ENCODE measurements at regions of chr17 and their contacts with region 1.

Region 1: DNA sequence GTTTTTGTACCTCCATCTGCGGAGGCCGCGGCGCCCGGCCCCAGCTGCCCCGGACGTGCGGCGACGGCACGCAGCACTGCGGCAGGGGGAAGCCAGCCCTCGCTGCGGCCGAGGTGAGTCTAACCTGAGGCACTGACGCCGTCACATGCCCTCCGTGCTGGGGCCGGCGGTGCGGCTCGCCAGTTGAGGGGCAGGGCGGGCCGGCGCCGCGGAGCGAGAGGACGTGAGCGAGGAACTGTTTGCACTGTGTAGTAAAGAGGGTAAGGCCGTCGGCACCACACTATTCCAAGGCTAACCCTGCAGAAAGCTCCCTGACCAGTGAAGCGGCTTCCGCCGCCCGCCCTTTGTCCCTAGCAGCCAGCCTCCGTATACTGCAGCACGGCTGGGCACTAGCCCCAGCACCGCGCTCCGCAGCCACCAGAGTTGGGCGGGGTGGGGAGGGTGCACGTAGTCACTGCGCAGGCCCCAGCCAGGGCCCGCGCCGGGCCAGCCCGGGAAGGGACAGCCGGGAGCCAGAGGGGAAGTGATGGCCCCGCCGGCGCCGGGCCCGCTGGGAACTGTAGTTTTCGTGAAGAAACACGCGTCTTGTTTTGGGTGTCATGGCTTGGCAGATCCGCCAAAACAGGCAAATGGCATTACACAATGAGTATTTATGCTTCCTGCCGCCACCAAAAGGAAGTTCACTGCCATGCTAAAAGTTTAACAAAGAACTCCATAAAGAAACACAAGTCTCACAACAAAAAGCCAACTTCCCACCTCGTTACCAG is 580 bp upstream of the KANSL1 start:
- DNase-seq: peak; percentile 95 to 98 (median 96)
- H3K4me3 ChIP-seq: peak overlapping the region; percentile 79 to 95 (median 85)
- H3K4me3 Mint-ChIP-seq: peak overlapping the region; percentile 80 to 87
- H3K27ac ChIP-seq: peak overlapping the region; percentile 91 to 99
- H3K27ac Mint-ChIP-seq: peak overlapping the region; percentile 89 to 98 (median 94)
- H3K4me1 ChIP-seq: peaks cover 20 to 35% of the 10 kb centered on the region in 2 donors
- H3K4me1 Mint-ChIP-seq: peaks cover 32% of the 10 kb centered on the region
- H3K27me3 ChIP-seq: no peaks in the 10 kb centered on the region
- H3K27me3 Mint-ChIP-seq: peaks cover 0 to 2% (median 0%) of the 10 kb centered on the region in 3 donors
- CTCF ChIP-seq: peak; percentile 54

Region 2: DNA sequence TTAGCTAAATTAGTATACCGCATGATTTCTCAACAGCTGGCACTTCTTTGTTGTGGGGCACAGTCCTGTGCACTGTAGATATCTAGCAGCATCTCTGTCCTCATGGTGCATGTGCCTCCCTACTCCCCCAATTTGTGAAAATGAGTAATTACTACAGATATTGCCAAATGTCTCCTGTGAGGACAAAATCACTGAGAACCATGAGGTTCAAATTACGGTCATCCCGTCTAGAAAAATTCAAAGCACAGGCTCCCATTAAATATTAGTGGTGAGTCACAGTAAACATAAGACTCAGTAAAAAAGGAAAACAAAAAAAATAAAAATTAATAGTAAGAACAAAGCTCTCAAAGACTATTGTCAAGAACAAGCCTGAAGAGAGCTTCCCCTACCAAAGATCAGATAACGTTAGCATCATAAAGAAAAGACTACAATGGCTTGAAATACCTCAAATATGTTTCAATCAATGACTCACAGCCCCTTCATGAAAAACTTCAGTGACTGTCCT is 137.0 kb before region 1 on chr17:
- intact Hi-C with region 1: loop called in 1 of 2 experiments (anchors 10 kb)
- DNase-seq: no peak
- H3K4me3 ChIP-seq: no peak overlapping the region
- H3K4me3 Mint-ChIP-seq: no peak overlapping the region
- H3K27ac ChIP-seq: no peak overlapping the region
- H3K27ac Mint-ChIP-seq: peak overlapping the region in 4 of 7 donors; percentile 2 to 47 (median 18)
- H3K4me1 ChIP-seq: no peaks in the 10 kb centered on the region
- H3K4me1 Mint-ChIP-seq: peaks cover 3% of the 10 kb centered on the region
- H3K27me3 ChIP-seq: no peaks in the 10 kb centered on the region
- H3K27me3 Mint-ChIP-seq: no peaks in the 10 kb centered on the region
- CTCF ChIP-seq: no peak

Region 3: DNA sequence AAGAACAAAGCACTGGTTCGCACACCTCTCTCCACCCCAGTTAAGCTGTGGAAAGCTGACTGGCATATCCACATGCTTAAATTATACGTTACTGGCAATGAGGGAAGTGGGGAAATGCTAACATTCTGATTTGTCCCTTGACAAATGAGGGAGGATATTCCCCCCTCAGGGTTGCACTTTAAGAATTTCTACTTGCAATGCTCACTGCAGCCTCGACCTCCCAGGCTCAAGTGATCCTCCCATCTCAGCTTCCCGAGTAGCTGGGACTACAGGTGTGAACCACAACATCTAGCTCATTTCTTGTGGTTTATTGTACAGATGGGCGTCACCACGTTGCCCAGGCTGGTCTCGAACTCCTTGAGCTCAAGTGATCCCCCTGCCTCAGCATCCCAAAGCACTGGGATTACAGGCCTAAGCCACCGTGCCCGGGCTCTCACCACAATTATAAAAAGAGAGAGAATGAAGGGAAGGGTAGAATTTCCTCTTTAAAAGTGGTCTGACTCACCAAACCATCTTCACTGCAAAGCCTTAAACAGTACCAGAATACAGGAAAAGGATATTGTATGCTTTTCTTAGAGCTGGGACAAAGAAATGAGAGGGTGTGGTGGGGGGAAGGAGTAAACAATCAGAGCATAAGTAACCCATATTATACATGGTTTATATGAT is 39.5 kb before region 1 on chr17:
- intact Hi-C with region 1: loop called (anchors 5 kb)
- DNase-seq: peak in 1 of 3 donors; percentile 4
- H3K4me3 ChIP-seq: no peak overlapping the region
- H3K4me3 Mint-ChIP-seq: peak overlapping the region in 1 of 2 donors; percentile 6
- H3K27ac ChIP-seq: peak overlapping the region in 1 of 2 donors; percentile 39
- H3K27ac Mint-ChIP-seq: peak overlapping the region in 6 of 7 donors; percentile 25 to 76 (median 68)
- H3K4me1 ChIP-seq: peaks cover 17 to 27% of the 10 kb centered on the region in 2 donors
- H3K4me1 Mint-ChIP-seq: peaks cover 63% of the 10 kb centered on the region
- H3K27me3 ChIP-seq: no peaks in the 10 kb centered on the region
- H3K27me3 Mint-ChIP-seq: no peaks in the 10 kb centered on the region
- CTCF ChIP-seq: no peak

Region 4: GRCh38 chr17:46212634-46213435 is 19.0 kb after region 1 on chr17:
- intact Hi-C with region 1: loop called in 1 of 2 experiments (anchors 2 kb)
- DNase-seq: peak; percentile 61 to 65 (median 62)
- H3K4me3 ChIP-seq: no peak overlapping the region
- H3K4me3 Mint-ChIP-seq: no peak overlapping the region
- H3K27ac ChIP-seq: no peak overlapping the region
- H3K27ac Mint-ChIP-seq: peak overlapping the region in 1 of 7 donors; percentile 3
- H3K4me1 ChIP-seq: peaks cover 4 to 5% of the 10 kb centered on the region in 2 donors
- H3K4me1 Mint-ChIP-seq: peaks cover 17% of the 10 kb centered on the region
- H3K27me3 ChIP-seq: no peaks in the 10 kb centered on the region
- H3K27me3 Mint-ChIP-seq: peaks cover 0 to 2% (median 0%) of the 10 kb centered on the region in 3 donors
- CTCF ChIP-seq: peak; percentile 83

Region 5: GRCh38 chr17:46266656-46267544 is 73.1 kb after region 1 on chr17:
- intact Hi-C with region 1: loop called in 1 of 2 experiments (anchors 2 kb)
- DNase-seq: peak; percentile 79 to 85 (median 79)
- H3K4me3 ChIP-seq: peak overlapping the region; percentile 83 to 91 (median 85)
- H3K4me3 Mint-ChIP-seq: peak overlapping the region; percentile 96 to 97
- H3K27ac ChIP-seq: peak overlapping the region; percentile 72 to 73
- H3K27ac Mint-ChIP-seq: peak overlapping the region; percentile 73 to 90 (median 84)
- H3K4me1 ChIP-seq: peaks cover 14 to 30% of the 10 kb centered on the region in 2 donors
- H3K4me1 Mint-ChIP-seq: peaks cover 34% of the 10 kb centered on the region
- H3K27me3 ChIP-seq: no peaks in the 10 kb centered on the region
- H3K27me3 Mint-ChIP-seq: peaks cover 21 to 39% (median 35%) of the 10 kb centered on the region in 3 donors
- CTCF ChIP-seq: peak; percentile 10